Activated CD4-positive, alpha-beta T cell treated with anti-CD3 and anti-CD28 coated beads for 36 hours (primary cell): ENCODE measurements at regions of chr15 and their contacts with region 1.

Region 1: GRCh38 chr15:78149068-78149804 is at the start of gene IDH3A:
- DNase-seq: peak; percentile 100
- ATAC-seq: peak; percentile 94
- H3K4me3 Mint-ChIP-seq: peak within 1 kb of the TSS; percentile 95
- H3K27ac Mint-ChIP-seq: peak within 1 kb of the TSS; percentile 96
- H3K4me1 Mint-ChIP-seq: peaks cover 41% of the 10 kb centered on the region
- H3K27me3 Mint-ChIP-seq: no peaks in the 10 kb centered on the region
- total RNA-seq, gene IDH3A: 129 to 135 TPM

Region 2: GRCh38 chr15:77543159-77543882 is 605.9 kb before region 1 on chr15:
- CTCF ChIA-PET with region 1: no interaction called
- POLR2A ChIA-PET with region 1: no interaction called
- intact Hi-C with region 1: no loop called
- DNase-seq: peak; percentile 89
- ATAC-seq: peak; percentile 95
- H3K4me3 Mint-ChIP-seq: peak overlapping the region; percentile 66
- H3K27ac Mint-ChIP-seq: peak overlapping the region; percentile 66
- H3K4me1 Mint-ChIP-seq: peaks cover 4% of the 10 kb centered on the region
- H3K27me3 Mint-ChIP-seq: no peaks in the 10 kb centered on the region

Region 3: DNA sequence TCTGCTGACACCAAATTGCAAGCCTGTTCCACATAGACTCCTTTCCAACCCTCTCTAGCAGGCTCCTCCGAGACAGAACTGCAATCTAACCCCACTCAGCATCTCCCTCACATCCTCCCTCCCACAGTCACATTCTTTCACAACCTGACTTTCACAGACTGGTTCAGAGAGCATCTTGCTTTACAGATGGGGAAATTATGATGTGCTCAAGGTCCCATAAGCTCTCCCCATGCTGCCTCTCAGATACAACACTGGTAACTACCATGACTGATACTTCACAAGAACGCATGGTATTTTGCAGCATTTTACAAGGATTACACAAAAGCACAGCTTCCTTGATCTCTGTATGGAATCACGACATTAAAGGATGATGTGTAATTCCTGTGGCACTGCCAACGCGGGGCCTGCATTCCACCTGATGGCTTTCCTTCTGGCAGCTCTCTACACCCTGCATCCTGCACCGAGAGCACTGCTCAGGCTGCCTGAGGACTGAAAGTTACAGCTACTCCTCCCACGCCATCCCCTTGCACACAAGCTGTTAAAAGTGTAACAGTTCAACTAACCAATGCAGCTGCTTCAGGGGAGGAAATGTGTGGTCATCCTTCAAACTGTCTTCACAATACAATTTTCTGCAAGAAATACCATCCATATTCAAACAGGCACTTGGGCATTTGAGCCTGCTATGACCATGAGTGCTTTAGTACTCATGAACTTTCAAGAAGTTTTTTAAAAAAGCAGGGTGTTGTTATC is 99.4 kb before region 1 on chr15:
- CTCF ChIA-PET with region 1: no interaction called
- POLR2A ChIA-PET with region 1: interaction called, 12 read pairs
- intact Hi-C with region 1: no loop called
- DNase-seq: peak; percentile 86
- ATAC-seq: peak; percentile 63
- H3K4me3 Mint-ChIP-seq: peak overlapping the region; percentile 54
- H3K27ac Mint-ChIP-seq: peak overlapping the region; percentile 90
- H3K4me1 Mint-ChIP-seq: peaks cover 97% of the 10 kb centered on the region
- H3K27me3 Mint-ChIP-seq: no peaks in the 10 kb centered on the region

Region 4: GRCh38 chr15:78131295-78132061 is 17.8 kb before region 1 on chr15 and contains the start of gene CIB2:
- CTCF ChIA-PET with region 1: interaction called, 4 read pairs
- POLR2A ChIA-PET with region 1: interaction called, 11 read pairs
- intact Hi-C with region 1: loop called (anchors 1 kb)
- DNase-seq: peak; percentile 86
- ATAC-seq: peak; percentile 87
- H3K4me3 Mint-ChIP-seq: peak within 1 kb of the TSS; percentile 82
- H3K27ac Mint-ChIP-seq: peak within 1 kb of the TSS; percentile 88
- H3K4me1 Mint-ChIP-seq: peaks cover 20% of the 10 kb centered on the region
- H3K27me3 Mint-ChIP-seq: no peaks in the 10 kb centered on the region
- total RNA-seq, gene CIB2: 0.91 to 1.2 TPM

Region 5: DNA sequence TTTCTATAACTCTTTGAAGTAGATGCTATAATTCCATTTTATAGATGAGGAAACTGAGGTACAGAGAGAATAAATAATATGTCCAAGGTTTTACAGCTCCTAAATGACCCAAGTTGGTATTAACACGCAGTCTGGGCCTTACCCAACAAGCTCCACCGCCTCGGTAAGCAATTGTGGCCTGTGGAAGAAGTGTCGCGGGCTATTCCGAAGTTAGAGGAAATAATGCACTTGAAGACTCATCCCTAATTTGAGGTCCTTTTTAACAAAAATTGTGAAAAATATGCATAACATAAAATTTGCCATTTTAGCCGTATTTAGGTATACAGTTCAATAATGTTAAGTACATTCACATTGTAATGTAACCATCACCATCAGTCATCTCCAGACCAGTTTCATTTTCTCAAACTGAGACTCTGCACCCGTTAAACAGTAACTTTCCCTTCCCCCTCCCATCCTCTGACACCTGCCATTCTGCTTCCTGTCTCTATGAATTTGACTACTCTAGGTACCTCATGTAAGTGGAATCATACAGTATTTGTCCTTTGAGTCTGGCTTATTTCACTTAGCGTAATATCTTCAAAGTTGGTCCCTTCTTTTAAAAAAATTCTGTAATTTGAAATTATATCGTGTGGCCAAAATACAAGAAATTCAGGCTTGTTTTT is 18.1 kb after region 1 on chr15:
- CTCF ChIA-PET with region 1: interaction called, 3 read pairs
- POLR2A ChIA-PET with region 1: interaction called, 5 read pairs
- intact Hi-C with region 1: loop called in 1 of 2 experiments (anchors 1 kb)
- DNase-seq: peak; percentile 61
- ATAC-seq: peak; percentile 100
- H3K4me3 Mint-ChIP-seq: no peak overlapping the region
- H3K27ac Mint-ChIP-seq: peak overlapping the region; percentile 73
- H3K4me1 Mint-ChIP-seq: peaks cover 22% of the 10 kb centered on the region
- H3K27me3 Mint-ChIP-seq: no peaks in the 10 kb centered on the region

Region 6: DNA sequence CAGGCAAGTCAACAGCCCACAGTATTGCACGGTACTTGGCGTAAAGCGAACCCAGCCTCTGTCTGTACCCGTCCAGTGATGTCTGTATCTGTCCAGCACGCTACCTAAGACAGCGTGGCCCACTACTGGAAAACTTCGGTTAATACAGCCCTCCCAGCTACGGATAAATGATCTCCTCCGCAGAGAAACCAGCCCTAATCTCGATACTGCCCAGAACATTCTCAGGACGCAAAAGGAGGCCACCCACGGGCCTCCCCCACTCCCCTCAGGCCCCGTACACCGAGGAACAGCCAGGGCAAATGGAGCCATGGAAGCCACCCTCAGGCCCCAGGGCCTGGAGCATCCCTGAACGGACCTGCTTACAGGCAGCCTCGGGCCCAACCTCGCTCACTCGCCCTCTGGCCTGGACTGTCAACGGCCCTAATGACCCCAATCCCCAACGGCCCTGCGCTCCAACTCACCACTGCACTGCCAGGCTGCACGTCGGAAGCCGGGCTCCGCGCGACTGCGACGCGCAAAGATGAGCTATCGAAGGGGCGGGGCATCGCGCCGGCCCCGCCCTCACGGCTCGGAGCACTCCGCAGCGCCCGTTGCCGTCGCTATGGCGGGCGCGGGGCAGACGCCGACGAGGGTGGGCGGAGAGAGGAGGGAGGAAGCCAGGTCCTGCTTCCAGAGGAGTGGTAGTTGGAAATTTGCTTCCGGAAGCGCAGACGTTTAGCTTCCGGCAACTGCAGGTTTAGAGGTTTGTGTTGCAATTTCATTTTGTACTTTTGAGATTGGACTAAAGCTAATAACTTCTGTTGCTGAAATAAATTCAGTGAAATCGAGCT is 150.1 kb after region 1 on chr15 and contains the start of gene SKIC8:
- CTCF ChIA-PET with region 1: interaction called, 4 read pairs
- POLR2A ChIA-PET with region 1: no interaction called
- intact Hi-C with region 1: loop called in 1 of 2 experiments (anchors 1 kb)
- DNase-seq: peak; percentile 95
- ATAC-seq: peak; percentile 96
- H3K4me3 Mint-ChIP-seq: peak within 1 kb of the TSS; percentile 96
- H3K27ac Mint-ChIP-seq: peak within 1 kb of the TSS; percentile 91
- H3K4me1 Mint-ChIP-seq: peaks cover 29% of the 10 kb centered on the region
- H3K27me3 Mint-ChIP-seq: no peaks in the 10 kb centered on the region
- total RNA-seq, gene SKIC8: 39.2 to 52.6 TPM

Region 7: DNA sequence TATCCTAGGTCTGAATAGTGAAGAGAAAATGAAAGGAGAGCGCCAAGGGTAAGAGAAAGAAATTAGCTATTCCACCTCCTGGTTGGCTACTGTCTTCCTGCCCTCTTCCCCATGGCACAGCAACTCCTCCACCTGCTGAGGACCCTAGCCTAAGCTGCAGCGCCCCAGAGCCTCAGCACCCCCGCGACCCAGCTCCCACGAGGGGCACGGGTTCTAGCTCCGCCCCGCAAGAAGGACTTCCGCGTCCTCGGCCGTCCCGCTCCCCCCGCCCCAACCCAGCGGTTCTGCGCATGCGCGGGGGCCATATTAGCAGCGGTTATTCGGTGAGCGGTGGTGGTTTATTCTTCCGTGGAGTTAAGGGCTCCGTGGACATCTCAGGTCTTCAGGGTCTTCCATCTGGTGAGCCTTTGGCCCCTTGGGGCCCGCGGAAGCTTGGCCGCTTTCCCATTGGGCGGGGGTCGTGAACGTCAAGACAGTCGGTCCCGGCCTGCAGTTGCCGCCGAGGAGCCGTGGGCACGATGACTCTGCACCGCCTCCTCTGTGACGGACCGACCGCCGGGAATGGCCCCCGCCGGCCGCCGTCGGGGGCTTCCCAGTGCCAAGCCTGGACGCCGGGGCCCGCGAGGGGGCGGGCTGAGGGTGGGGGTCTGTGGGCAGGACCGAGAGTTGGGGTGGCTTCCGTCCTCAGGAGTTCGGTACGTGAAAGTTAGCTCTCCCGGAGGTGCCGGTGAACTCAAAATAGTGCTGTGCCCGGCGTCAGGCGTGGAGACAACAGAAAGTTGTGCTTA is 391.1 kb after region 1 on chr15 and contains the start of gene PSMA4:
- CTCF ChIA-PET with region 1: no interaction called
- POLR2A ChIA-PET with region 1: no interaction called
- intact Hi-C with region 1: loop called in 1 of 2 experiments (anchors 1 kb)
- DNase-seq: peak; percentile 96
- ATAC-seq: peak; percentile 86
- H3K4me3 Mint-ChIP-seq: peak within 1 kb of the TSS; percentile 91
- H3K27ac Mint-ChIP-seq: peak within 1 kb of the TSS; percentile 98
- H3K4me1 Mint-ChIP-seq: peaks cover 27% of the 10 kb centered on the region
- H3K27me3 Mint-ChIP-seq: no peaks in the 10 kb centered on the region
- total RNA-seq, gene PSMA4: 273 to 312 TPM